Aorta (tissue), 5 donors: ENCODE measurements at regions of chr12 and their contacts with region 1.

Region 1: DNA sequence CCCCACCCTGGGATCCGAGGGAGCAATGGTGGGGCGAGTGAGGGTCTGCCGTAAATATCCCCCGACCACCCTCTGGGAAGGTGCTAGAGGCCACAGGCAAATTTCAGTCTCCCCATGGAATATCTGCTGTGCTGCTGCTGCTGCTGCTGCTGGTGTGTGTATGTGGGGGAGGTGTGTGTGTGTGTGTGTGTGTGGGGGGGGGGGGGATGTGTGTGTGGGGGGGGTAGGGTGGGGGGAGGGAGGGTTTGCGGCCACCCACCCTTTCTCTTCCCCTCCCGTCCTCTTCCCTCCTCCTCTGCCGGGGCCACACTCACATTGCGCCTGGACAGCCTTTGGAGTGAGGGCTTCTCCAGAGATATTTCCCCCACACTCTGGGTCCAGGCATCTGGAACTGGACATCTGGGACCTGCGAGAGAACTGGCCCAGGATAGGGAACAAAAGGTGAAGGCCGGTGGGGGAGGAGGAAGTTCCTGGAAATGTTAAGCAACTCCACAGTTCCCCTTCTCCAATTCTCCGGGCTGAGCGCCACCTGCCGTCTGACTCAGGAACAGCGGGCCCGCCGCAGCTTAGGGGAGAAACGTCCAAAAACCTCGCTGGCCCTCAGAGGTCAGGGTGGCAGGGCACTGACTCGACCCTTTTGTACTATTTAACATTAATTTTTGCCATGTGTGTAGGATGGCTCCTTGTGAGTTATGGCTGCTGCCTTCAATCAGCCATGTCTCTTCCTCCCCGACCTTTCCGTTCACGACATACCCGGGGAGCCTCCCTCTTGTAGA is at the start of gene C1RL:
- DNase-seq: peak; percentile 93 to 97
- ATAC-seq: peak; percentile 90
- H3K4me3 ChIP-seq: peak within 1 kb of the TSS; percentile 19 to 84
- H3K27ac ChIP-seq: peak within 1 kb of the TSS; percentile 74 to 92
- H3K4me1 ChIP-seq: no peaks in the 10 kb centered on the region
- H3K27me3 ChIP-seq: no peaks in the 10 kb centered on the region
- total RNA-seq, gene C1RL: 82.0 to 139 TPM

Region 2: GRCh38 chr12:6944381-6945186 is 164.4 kb before region 1 on chr12:
- intact Hi-C with region 1: loop called (anchors 2 to 5 kb)
- DNase-seq: peak; percentile 96 to 97
- ATAC-seq: peak; percentile 90
- H3K4me3 ChIP-seq: peak overlapping the region; percentile 34 to 70
- H3K27ac ChIP-seq: peak overlapping the region; percentile 93 to 99
- H3K4me1 ChIP-seq: no peaks in the 10 kb centered on the region
- H3K27me3 ChIP-seq: peaks cover 0 to 4% of the 10 kb centered on the region in 2 donors

Region 3: DNA sequence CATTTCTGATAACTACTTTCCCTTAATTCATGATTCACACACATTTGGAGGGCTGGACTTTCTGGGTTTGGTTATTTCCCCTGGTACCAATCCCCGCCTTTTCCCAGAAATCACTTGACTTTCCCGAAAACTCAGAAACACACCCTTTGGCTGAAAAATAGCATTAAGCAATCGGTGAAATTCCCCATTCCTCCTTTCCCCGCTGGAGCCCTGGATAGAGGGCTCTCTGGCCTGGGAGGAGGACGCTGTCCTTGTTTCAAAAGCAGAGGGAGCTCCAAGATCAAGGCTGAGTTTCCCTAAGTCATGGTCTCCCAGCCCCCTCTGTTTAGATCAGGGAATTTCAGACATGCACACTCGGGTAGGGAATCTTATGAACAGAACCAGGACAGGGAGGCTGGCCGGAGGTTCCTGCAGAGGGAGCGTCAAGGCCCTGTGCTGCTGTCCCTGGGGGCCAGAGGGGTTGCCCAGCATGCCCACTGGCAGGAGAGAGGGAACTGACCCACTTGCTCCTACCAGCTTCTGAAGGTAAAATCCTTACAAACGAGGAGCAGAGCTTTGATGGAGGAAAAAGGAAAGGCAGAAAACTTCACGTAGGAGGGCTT is 48.5 kb before region 1 on chr12 and contains the start of gene C1S:
- intact Hi-C with region 1: loop called (anchors 1 to 2 kb)
- DNase-seq: peak; percentile 86 to 87
- ATAC-seq: peak; percentile 96
- H3K4me3 ChIP-seq: peak within 1 kb of the TSS in 1 of 2 donors; percentile 34
- H3K27ac ChIP-seq: peak within 1 kb of the TSS in 1 of 2 donors; percentile 71
- H3K4me1 ChIP-seq: no peaks in the 10 kb centered on the region
- H3K27me3 ChIP-seq: no peaks in the 10 kb centered on the region
- total RNA-seq, gene C1S: 490 to 1,087 TPM

Region 4: DNA sequence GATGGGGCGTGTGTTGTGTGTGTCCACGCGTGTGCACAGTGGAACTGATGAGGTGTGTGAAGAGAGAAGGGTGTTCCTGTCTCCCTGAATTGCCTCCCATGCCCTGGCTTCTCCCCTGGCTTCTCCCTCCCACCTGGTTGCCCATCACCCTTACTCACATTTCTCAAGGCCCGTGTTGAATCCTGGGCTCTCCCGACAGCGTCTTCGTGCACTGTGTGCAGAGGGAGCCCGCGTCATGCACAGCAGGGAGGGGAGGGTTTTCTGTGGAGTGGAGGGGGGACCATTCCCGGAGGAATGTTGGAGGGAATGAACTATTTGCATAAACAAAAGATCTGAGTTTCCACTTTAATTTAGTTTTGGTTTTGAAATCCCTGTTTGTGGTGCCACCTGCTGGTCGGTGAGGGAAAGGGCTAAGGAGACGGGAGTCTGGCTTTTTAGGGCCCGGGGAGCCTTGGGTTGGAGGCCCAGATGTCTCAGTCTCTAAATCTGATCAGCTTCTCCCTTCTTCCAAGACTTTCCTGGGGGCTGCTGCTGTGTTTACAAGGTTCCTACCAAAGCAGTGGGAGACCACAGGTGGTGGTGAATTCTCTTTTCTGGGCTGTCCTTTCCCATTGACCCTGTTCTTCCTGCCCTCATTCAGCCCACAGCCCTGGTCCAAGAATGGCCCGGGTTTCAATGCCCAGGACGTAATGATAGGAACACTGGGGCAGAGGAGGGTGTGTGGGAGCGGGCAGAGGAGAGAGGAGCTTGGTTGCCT is 16.6 kb before region 1 on chr12 and contains the start of gene C1R:
- intact Hi-C with region 1: loop called in 1 of 2 experiments (anchors 1 kb)
- DNase-seq: peak; percentile 89 to 92
- ATAC-seq: peak; percentile 86
- H3K4me3 ChIP-seq: peak within 1 kb of the TSS; percentile 44 to 51
- H3K27ac ChIP-seq: peak within 1 kb of the TSS in 1 of 2 donors; percentile 65
- H3K4me1 ChIP-seq: no peaks in the 10 kb centered on the region
- H3K27me3 ChIP-seq: no peaks in the 10 kb centered on the region
- total RNA-seq, gene C1R: 769 to 1,570 TPM